Posterior cingulate gyrus (tissue), 11 donors: ENCODE measurements at regions of chr12 and their contacts with region 1.

Region 1: GRCh38 chr12:123232807-123233543 is at the starts of genes MPHOSPH9 and MTRFR:
- DNase-seq: peak; percentile 95 to 100 (median 98)

Region 2: DNA sequence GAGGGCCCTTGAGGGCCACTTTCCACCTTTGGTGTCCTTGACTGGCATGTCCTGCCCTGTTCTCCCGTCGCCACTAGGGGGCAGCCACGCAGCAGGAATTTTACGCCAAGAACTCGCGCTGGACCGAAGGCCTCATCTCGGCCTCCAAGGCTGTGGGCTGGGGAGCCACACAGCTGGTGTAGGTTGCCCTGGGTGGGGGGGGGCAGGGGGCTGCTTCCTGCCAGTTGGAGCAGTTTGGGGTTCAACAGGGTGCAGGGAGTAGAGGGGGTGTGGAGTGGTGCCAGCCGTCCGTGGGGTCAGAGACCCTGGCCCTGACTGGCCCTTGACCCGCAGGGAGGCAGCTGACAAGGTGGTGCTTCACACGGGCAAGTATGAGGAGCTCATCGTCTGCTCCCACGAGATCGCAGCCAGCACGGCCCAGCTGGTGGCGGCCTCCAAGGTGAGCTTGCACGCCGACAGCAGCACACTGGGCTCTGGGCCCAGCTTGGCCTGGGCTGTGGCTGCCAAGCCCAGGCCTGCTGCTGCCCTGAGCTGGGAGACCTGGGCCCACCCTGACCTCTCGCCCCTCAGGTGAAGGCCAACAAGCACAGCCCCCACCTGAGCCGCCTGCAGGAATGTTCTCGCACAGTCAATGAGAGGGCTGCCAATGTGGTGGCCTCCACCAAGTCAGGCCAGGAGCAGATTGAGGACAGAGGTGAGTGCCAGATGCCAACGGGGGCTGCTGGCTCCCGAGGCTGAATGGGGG is 372.5 kb before region 1 on chr12:
- intact Hi-C with region 1: loop called (anchors 10 kb)
- DNase-seq: peak; percentile 80 to 98 (median 91)

Region 3: GRCh38 chr12:122980183-122981046 is 252.6 kb before region 1 on chr12 and contains the start of gene ARL6IP4:
- intact Hi-C with region 1: loop called (anchors 5 kb)
- DNase-seq: peak; percentile 44 to 94 (median 67)

Region 4: DNA sequence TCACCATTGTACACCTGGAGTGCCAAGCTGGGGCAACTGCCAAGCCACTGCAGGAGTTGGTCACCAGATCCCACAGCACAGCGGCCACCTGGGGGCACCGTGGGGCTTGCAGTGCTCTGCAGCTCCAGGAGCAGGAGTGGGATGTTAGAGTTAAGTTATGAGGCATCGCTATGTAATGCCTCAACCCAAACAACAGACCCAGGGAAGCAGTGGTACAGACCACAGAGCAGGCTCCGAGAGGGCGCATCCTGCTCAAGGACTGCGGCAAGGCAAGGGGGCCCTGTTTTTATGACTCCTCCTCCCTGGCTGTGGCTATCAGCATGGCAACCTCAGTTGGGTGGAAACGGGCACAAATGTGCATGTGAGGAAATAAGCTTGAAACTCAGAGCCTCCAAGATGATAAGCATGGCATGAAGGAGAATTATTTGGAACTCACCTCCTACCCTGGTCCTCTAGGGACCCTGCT is 189.4 kb before region 1 on chr12:
- intact Hi-C with region 1: loop called (anchors 10 kb)
- DNase-seq: peak; percentile 42 to 96 (median 78)

Region 5: DNA sequence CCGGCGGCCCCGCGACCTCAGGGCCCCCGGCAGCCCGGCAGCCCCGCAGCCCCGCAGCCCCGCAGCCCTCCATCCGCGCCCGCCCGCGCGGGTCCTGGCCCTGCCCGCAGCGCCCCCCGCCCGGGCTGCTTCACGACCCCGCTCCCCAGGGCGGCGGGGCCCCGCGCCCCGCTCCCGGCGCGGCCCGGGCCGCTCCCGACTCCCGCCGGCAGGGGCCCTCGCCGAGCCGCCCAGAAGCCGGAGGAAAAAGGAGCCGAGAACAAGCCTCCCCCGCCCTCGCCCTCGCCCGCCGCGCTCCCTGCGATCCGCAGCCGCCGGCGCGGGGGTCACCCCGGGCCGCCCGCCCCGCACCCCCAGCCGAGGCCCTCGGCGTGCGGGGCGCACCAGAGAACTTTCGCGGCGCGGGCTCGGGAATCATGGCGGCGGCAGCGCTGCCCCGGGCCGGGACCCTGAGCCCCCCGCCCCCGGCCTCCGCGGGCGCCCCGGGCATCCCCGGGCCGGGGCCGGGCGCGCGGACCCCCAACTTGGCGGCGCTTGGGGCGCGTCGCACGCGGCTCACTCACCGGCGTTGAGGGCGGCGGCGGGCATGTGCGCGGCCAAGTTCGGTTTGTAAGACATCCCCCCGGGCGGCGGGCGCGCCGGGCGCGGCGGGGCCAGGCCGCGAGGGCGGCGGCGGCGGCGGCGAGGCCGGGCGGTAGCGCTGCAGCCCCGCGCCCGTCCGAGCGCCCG is 38.2 kb after region 1 on chr12:
- intact Hi-C with region 1: loop called (anchors 2 kb)
- DNase-seq: peak; percentile 63 to 96 (median 76)

Region 6: DNA sequence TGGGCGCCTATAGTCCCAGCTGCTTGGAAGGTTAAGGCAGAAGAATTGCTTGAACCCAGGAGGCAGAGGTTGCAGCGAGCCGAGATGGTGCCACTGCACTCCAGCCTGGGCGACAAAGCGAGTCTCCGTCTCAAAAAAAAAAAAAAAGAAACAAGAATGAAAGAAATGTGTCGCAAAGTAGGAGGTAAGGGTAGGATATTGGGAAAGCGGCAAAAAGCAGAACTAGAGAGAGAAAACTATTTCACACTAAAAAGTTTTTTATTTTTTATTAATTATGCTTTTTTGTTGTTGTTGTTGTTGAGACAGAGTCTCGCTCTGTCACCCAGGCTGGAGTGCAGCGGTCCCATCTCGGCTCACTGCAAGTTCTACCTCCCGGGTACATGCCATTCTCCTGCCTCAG is 114.0 kb after region 1 on chr12:
- intact Hi-C with region 1: no loop called
- DNase-seq: no peak

Region 7: GRCh38 chr12:123801573-123802178 is 568.7 kb after region 1 on chr12:
- intact Hi-C with region 1: no loop called
- DNase-seq: no peak